ENCODE measurements at regions of chr7 and their contacts with region 1.

Region 1: GRCh38 chr7:34596892-34597291 is 61.1 kb upstream of the NPSR1 start:
- DNase-seq: no peak
- ATAC-seq: peak in 1 of 4 donors; percentile 52
- H3K4me3 ChIP-seq: no peak overlapping the region
- H3K27ac ChIP-seq: no peak overlapping the region
- H3K4me1 ChIP-seq: no peaks in the 10 kb centered on the region
- H3K27me3 ChIP-seq: no peaks in the 10 kb centered on the region
- CTCF ChIP-seq: peak in 8 of 12 donors; percentile 15 to 48 (median 38)
- POLR2A ChIP-seq: no peak

Region 2: DNA sequence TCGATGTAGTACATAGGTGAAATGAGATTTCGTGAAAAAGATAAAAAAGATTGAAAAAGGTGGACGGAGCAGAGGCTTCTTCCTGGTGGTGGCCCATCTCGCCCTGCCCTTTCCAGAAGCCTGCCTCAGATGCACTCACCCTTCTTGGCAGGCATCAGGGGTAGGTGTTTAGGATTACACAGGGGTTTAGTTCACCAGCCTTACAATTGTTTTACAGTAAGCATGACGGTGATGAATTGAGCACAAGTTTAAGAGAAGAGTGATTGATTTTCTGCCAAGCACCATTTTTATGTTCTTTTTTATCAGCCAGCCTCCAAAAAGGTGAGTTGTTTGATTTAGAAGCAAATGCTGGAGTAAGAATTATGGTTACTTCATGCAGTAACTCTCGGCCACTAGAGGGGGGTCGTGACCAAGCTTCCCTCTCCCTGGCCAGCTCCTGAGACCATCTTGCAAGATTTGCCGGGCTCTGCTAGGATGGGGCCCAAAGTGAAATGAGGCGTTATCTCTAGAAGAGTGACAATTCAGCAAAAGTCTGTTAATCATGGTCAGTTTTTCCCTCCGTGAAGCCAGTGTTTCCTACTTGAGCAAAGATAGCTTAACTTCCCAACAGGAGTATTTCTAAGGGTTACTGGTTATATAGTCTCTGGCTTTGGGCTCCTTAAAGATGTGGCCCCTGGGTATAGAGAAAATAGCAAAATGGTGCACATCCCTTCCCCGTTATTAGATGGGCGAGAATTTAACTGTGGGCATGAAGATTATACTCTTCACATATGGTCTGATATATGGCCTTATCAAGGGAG is 462.7 kb before region 1 on chr7:
- intact Hi-C with region 1: loop called in 3 of 10 experiments (anchors 5 to 10 kb)
- DNase-seq: peak; percentile 42 to 66 (median 52)
- ATAC-seq: peak in 3 of 4 donors; percentile 55 to 74 (median 66)
- H3K4me3 ChIP-seq: no peak overlapping the region
- H3K27ac ChIP-seq: no peak overlapping the region
- H3K4me1 ChIP-seq: no peaks in the 10 kb centered on the region
- H3K27me3 ChIP-seq: no peaks in the 10 kb centered on the region
- CTCF ChIP-seq: peak; percentile 44 to 75 (median 61)
- POLR2A ChIP-seq: no peak

Region 3: GRCh38 chr7:34315032-34315431 is 281.9 kb before region 1 on chr7:
- intact Hi-C with region 1: loop called in 8 of 10 experiments (anchors 2 to 10 kb)
- DNase-seq: no peak
- ATAC-seq: no peak
- H3K4me3 ChIP-seq: no peak overlapping the region
- H3K27ac ChIP-seq: no peak overlapping the region
- H3K4me1 ChIP-seq: no peaks in the 10 kb centered on the region
- H3K27me3 ChIP-seq: no peaks in the 10 kb centered on the region
- CTCF ChIP-seq: no peak
- POLR2A ChIP-seq: no peak

Region 4: DNA sequence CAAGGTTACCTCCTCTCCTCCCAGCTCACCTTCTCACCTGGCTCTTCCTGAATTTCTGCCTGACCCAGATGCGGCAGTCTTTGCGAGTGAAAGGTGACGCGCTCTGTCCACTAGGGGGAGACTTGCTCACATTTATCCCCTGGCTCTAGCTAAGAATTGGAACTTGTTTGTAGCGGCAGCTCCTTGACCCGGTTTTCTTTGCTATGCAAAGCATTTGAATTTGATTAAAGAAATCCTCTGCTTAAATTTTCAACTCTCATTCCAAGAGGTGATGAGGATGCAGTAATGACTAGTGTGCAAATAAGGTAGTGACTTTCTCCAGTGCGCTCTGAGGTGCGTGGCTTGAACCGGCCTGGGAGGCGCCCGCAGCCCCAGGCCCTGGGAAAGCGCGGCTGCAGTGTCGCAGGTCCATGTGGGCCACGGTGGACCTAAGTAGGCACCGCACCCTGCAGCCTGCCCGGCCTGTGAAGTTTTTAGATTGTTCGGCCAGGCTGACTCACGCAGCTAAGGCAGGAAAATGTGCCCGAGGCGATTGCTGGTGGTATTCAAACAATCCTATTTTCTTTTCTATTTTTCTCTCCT is 275.8 kb before region 1 on chr7:
- intact Hi-C with region 1: loop called in 8 of 10 experiments (anchors 2 to 10 kb)
- DNase-seq: peak in 4 of 5 donors; percentile 23 to 37 (median 32)
- ATAC-seq: peak; percentile 58 to 85 (median 79)
- H3K4me3 ChIP-seq: peak overlapping the region in 7 of 12 donors; percentile 15 to 47 (median 27)
- H3K27ac ChIP-seq: no peak overlapping the region
- H3K4me1 ChIP-seq: peaks cover 0 to 7% (median 0%) of the 10 kb centered on the region in 12 donors
- H3K27me3 ChIP-seq: peaks cover 0 to 6% (median 0%) of the 10 kb centered on the region in 9 donors
- CTCF ChIP-seq: peak; percentile 61 to 86 (median 76)
- POLR2A ChIP-seq: no peak

Region 5: GRCh38 chr7:34341316-34341715 is 255.6 kb before region 1 on chr7:
- intact Hi-C with region 1: loop called in 1 of 10 experiments (anchors 10 kb)
- DNase-seq: no peak
- ATAC-seq: no peak
- H3K4me3 ChIP-seq: no peak overlapping the region
- H3K27ac ChIP-seq: no peak overlapping the region
- H3K4me1 ChIP-seq: no peaks in the 10 kb centered on the region
- H3K27me3 ChIP-seq: no peaks in the 10 kb centered on the region
- CTCF ChIP-seq: no peak
- POLR2A ChIP-seq: no peak